ENCODE measurements at regions of chr11 and their contacts with region 1.

Region 1: DNA sequence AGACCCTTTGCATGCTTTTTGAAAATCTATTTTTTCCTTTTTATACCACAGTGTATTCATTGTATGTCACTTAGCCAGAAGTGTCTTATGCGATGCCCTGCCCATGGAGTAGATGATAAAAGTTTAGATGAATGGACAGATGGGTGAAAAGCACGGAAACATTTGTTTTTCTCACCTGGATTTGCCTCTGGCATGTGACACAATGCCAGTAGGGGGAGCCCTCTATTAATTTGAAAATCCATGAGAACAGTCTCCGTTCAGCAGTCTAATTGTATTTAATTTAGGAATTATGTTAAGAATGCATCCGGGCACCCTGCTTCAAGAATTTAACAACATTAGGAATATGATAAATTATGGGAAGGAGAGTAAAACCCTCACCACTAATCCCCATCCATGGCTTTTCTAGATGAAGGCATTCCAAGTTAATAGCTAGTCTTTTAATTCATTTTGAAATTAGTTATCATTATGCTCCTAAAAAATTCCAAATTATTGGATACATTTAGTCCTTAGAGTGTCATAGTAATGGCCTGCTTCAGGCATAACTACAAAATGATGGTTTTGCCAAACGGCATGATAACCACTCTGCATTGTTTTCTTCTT is 55.3 kb upstream of the ALKBH3 start:
- DNase-seq: no peak
- H3K4me3 ChIP-seq: no peak overlapping the region
- H3K27ac ChIP-seq: no peak overlapping the region
- H3K27me3 ChIP-seq: no peaks in the 10 kb centered on the region
- CTCF ChIP-seq: peak; percentile 81

Region 2: GRCh38 chr11:43788421-43788820 is 36.9 kb before region 1 on chr11:
- CTCF ChIA-PET with region 1: interaction called, 14 read pairs
- POLR2A ChIA-PET with region 1: no interaction called
- DNase-seq: no peak
- H3K4me3 ChIP-seq: no peak overlapping the region
- H3K27ac ChIP-seq: no peak overlapping the region
- H3K27me3 ChIP-seq: no peaks in the 10 kb centered on the region
- CTCF ChIP-seq: no peak

Region 3: DNA sequence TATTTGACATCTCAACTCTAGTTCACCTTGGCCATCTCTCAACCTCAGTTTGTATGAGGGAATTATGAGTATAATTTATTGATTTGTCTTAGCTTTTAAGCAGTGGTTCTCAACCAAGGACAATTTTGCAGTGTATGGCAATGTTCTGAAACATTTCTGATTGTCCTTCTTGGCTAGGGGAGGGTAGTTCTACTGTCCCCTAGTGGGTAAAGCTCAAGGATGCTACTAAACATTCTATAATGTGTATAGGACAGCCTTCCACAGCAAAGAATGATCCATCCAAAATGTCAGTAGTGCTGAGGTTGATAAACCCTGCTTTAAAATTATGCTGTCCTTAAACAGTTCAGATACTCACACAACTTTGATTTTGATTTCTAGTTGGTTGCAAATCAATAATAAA is 22.8 kb before region 1 on chr11:
- CTCF ChIA-PET with region 1: interaction called, 11 read pairs
- POLR2A ChIA-PET with region 1: no interaction called
- DNase-seq: no peak
- H3K4me3 ChIP-seq: no peak overlapping the region
- H3K27ac ChIP-seq: no peak overlapping the region
- H3K27me3 ChIP-seq: no peaks in the 10 kb centered on the region
- CTCF ChIP-seq: peak; percentile 50

Region 4: DNA sequence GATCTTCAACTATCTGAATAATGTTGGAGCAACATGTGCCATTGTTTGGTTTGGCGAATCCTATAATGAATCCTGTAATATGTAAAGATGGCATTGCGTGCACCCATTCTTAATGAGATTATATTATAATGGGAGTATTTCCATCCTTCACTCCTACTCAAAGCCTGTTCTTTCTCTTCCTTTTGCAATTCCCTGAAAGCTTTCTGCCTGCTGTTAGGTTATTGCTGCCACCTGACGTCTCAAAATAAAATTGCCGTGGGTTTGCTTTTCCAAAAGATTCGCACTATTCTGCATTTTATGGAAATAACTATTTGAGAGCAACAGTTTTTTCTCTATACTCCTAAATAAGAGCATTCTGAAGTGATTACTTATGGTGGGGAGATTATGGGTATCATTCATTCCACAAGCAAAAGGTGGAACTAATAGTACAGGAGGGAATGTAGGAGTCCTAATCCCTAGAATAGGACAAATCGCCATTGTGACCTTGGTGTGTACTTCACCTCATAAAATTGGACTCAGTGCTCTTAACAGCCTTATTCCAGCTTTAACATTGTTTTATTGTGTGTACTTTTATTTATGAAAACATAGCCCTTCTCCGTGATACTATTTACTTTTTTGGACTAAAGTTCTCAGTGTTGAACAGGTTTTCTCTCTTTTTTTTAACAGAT is 14.3 kb before region 1 on chr11:
- CTCF ChIA-PET with region 1: interaction called, 29 read pairs
- POLR2A ChIA-PET with region 1: no interaction called
- DNase-seq: no peak
- H3K4me3 ChIP-seq: no peak overlapping the region
- H3K27ac ChIP-seq: no peak overlapping the region
- H3K27me3 ChIP-seq: no peaks in the 10 kb centered on the region
- CTCF ChIP-seq: peak; percentile 54

Region 5: GRCh38 chr11:44029977-44030911 is 204.9 kb after region 1 on chr11:
- CTCF ChIA-PET with region 1: no interaction called
- POLR2A ChIA-PET with region 1: no interaction called
- DNase-seq: no peak
- H3K4me3 ChIP-seq: no peak overlapping the region
- H3K27ac ChIP-seq: no peak overlapping the region
- H3K27me3 ChIP-seq: peaks cover 11% of the 10 kb centered on the region
- CTCF ChIP-seq: no peak